K562 (cell line): ENCODE measurements at regions of chr1 and their contacts with region 1.

Region 1: DNA sequence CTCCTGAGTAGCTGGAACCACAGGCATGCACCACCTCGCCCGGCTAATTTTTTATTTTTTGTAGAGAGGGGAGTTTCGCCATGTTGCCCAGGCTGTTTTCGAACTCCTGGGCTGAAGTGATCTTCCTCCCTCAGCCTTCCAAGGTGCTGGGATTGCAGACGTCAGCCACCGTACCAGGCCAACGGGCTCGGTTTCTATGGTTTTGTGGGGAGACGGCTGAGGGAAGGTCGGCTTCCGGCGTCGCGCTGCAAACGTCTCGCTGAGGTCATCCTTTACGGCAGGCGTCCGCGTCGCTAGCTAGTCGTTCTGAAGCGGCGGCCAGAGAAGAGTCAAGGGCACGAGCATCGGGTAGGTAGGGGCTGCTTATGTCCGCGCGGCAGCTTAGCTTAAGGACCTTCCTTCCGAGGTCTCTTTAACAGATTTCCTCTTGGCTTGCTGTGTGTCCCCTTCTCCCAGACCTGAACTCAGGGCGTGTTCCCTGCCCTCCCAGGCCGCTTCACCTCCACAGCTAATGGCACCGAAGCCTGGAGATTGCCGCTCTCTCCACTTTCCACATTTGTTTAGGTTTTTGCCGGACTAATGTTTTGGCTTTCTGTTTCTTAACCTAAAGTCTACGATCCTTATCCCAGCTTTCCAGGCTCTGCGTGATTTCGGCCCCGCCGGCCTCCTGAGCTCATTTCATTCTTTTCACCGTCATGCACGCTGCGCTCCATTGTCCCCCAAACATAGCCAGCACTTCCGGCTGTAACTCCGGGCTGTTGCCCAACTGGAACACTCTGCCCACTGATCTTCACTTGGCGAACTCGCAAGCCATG is at the start of gene NDUFS5:
- DNase-seq: peak; percentile 85 to 97 (median 86)
- ATAC-seq: peak; percentile 94
- H3K4me3 ChIP-seq: peak within 1 kb of the TSS; percentile 77
- H3K27ac ChIP-seq: peak within 1 kb of the TSS; percentile 92
- H3K4me1 ChIP-seq: peaks cover 5 to 13% of the 10 kb centered on the region in 2 experiments; a peak in 4 of 5 replicates
- H3K27me3 ChIP-seq: no peaks in the 10 kb centered on the region
- CTCF ChIP-seq: no peak
- EP300 ChIP-seq: peak; percentile 16
- POLR2A ChIP-seq: peak; percentile 98
- RAD21 ChIP-seq: no peak
- polyA plus RNA-seq, gene NDUFS5: 2,515 to 2,737 TPM

Region 2: DNA sequence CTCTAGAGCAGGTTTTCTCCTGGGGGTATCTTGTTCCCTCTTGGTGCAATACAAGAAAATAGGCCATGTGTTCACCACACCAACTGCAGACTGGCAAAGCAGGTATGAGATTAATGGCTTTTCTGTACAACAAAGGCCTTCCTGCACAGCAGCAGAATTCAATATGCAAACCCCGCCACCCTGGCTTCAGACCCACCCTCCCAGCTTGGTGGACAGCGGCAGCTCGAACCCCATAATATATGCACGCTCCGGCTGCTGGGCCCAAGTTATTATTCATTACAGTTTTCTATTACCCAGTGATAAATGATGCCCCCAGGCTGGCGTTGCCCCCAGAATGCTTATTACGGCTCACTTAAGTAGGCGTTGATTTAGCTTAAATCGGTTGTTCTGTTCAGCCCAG is 310.8 kb before region 1 on chr1:
- CTCF ChIA-PET with region 1: no interaction called
- POLR2A ChIA-PET with region 1: no interaction called
- in situ Hi-C with region 1: no loop called
- intact Hi-C with region 1: no loop called
- DNase-seq: no peak
- ATAC-seq: no peak
- H3K4me3 ChIP-seq: no peak overlapping the region
- H3K27ac ChIP-seq: no peak overlapping the region
- H3K4me1 ChIP-seq: no peaks in the 10 kb centered on the region
- H3K27me3 ChIP-seq: 0 out of 5 replicates have a peak, but pooled peaks cover 0 to 3% of the 10 kb centered on the region in 2 experiments
- CTCF ChIP-seq: no peak
- EP300 ChIP-seq: no peak
- POLR2A ChIP-seq: no peak
- RAD21 ChIP-seq: no peak

Region 3: DNA sequence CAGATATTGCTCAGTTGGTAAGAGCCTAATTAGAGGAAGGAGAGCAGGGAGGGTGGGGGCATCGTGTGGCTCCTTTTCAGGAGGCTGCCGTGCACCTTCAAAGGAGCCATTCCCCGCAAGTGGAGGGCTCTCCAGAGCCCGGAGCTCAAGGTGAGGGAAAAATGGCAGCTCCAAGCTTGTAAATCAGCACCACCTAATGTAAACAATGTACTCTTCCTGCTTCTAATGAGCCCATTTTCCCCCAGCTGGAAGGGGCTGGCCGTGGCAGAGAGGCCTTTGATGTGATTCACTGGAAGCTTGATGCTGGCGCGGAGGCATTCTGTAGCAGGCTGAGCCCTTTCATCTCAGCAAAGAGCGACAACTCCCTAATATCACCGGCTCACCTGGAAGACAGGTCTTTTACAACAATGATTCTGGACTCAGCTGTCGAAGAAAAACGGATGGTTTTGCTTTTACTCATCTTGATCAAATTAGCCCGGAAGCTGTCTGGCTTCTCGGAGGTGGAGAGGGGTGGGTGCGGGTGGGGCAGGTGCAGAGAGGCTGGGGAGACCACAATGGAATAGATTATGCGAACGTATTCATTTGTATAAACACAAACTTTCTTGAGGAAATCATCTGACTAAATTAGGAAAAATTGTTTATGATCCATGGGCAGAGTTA is 279.2 kb before region 1 on chr1:
- CTCF ChIA-PET with region 1: no interaction called
- POLR2A ChIA-PET with region 1: no interaction called
- in situ Hi-C with region 1: no loop called
- intact Hi-C with region 1: no loop called
- DNase-seq: no peak
- ATAC-seq: no peak
- H3K4me3 ChIP-seq: no peak overlapping the region
- H3K27ac ChIP-seq: no peak overlapping the region
- H3K4me1 ChIP-seq: peaks cover 28 to 36% of the 10 kb centered on the region in 2 experiments
- H3K27me3 ChIP-seq: no peaks in the 10 kb centered on the region
- CTCF ChIP-seq: no peak
- EP300 ChIP-seq: no peak
- POLR2A ChIP-seq: no peak
- RAD21 ChIP-seq: no peak

Region 4: GRCh38 chr1:38859561-38860453 is 166.5 kb before region 1 on chr1 and contains the start of gene RRAGC:
- CTCF ChIA-PET with region 1: no interaction called
- POLR2A ChIA-PET with region 1: no interaction called
- in situ Hi-C with region 1: no loop called
- intact Hi-C with region 1: no loop called
- DNase-seq: peak; percentile 99 to 100 (median 100)
- ATAC-seq: peak; percentile 99
- H3K4me3 ChIP-seq: peak within 1 kb of the TSS; percentile 66
- H3K27ac ChIP-seq: peak within 1 kb of the TSS; percentile 59
- H3K4me1 ChIP-seq: peaks cover 15 to 22% of the 10 kb centered on the region in 2 experiments; a peak in 4 of 5 replicates
- H3K27me3 ChIP-seq: no peaks in the 10 kb centered on the region
- CTCF ChIP-seq: no peak
- EP300 ChIP-seq: peak; percentile 65; the same call in 1 of the 2 replicates
- POLR2A ChIP-seq: peak; percentile 65
- RAD21 ChIP-seq: peak in 1 of 2 experiments; percentile 26; a peak in 1 of 4 replicates
- polyA plus RNA-seq, gene RRAGC: 10.4 to 16.9 TPM

Region 5: DNA sequence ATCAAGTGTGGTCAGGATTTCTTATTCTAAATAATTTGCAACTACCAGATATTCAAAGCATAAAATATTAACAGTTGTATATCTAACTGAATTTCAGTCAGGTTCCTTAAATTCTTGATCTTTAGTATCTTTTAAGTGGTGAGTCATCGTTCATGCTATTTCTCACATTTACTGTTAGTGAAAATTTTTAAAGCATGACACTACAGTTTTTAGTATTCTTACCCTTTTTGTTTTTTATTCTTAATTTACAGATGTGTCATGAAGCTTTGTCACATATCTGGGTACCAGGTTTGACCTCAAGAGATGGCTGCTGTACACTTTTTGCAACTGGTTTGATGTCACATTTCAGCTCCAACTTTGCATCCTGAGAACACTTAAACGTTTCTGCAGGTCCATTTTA is 22.5 kb before region 1 on chr1:
- CTCF ChIA-PET with region 1: no interaction called
- POLR2A ChIA-PET with region 1: interaction called, 25 read pairs
- in situ Hi-C with region 1: no loop called
- intact Hi-C with region 1: no loop called
- DNase-seq: no peak
- ATAC-seq: no peak
- H3K4me3 ChIP-seq: no peak overlapping the region
- H3K27ac ChIP-seq: peak overlapping the region; percentile 17; the same call in 1 of the 3 replicates
- H3K4me1 ChIP-seq: no peaks in the 10 kb centered on the region
- H3K27me3 ChIP-seq: no peaks in the 10 kb centered on the region
- CTCF ChIP-seq: no peak
- EP300 ChIP-seq: no peak
- POLR2A ChIP-seq: no peak
- RAD21 ChIP-seq: no peak

Region 6: GRCh38 chr1:39036678-39037077 is 10.4 kb after region 1 on chr1:
- CTCF ChIA-PET with region 1: no interaction called
- POLR2A ChIA-PET with region 1: interaction called, 25 read pairs
- in situ Hi-C with region 1: no loop called
- intact Hi-C with region 1: no loop called
- DNase-seq: no peak
- ATAC-seq: no peak
- H3K4me3 ChIP-seq: no peak overlapping the region
- H3K27ac ChIP-seq: no peak overlapping the region
- H3K4me1 ChIP-seq: no peaks in the 10 kb centered on the region
- H3K27me3 ChIP-seq: no peaks in the 10 kb centered on the region
- CTCF ChIP-seq: no peak
- EP300 ChIP-seq: no peak
- POLR2A ChIP-seq: no peak
- RAD21 ChIP-seq: no peak